ENCODE measurements at regions of chr10 and their contacts with region 1.

Region 1: DNA sequence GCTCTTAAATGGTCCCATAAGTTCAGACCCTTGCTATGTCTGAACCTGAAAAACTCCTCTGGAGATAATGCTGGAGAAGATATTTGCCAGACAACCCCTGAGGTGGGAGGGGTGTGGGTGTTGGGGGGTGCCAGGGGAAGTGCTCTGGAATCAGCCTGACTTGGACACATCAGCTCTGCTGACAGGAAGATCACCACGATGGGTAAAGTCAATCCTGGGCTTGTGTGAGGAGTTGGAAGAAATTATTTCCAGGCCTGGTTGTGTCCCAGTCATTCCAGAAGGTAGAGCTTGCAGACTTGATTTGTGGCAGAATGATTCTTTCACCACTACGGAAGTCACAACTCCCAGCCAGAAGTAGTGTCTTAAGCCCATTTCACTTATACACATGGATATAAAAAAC is 60.3 kb upstream of the UNC5B start:
- DNase-seq: no peak
- ATAC-seq: no peak
- H3K4me3 Mint-ChIP-seq: no peak overlapping the region
- H3K27ac Mint-ChIP-seq: no peak overlapping the region
- H3K4me1 Mint-ChIP-seq: peaks cover 3% of the 10 kb centered on the region
- H3K27me3 Mint-ChIP-seq: no peaks in the 10 kb centered on the region

Region 2: GRCh38 chr10:71094712-71095390 is 57.2 kb before region 1 on chr10:
- CTCF ChIA-PET with region 1: no interaction called
- POLR2A ChIA-PET with region 1: no interaction called
- DNase-seq: peak; percentile 20
- ATAC-seq: no peak
- H3K4me3 Mint-ChIP-seq: no peak overlapping the region
- H3K27ac Mint-ChIP-seq: no peak overlapping the region
- H3K4me1 Mint-ChIP-seq: no peaks in the 10 kb centered on the region
- H3K27me3 Mint-ChIP-seq: peaks cover 32% of the 10 kb centered on the region

Region 3: DNA sequence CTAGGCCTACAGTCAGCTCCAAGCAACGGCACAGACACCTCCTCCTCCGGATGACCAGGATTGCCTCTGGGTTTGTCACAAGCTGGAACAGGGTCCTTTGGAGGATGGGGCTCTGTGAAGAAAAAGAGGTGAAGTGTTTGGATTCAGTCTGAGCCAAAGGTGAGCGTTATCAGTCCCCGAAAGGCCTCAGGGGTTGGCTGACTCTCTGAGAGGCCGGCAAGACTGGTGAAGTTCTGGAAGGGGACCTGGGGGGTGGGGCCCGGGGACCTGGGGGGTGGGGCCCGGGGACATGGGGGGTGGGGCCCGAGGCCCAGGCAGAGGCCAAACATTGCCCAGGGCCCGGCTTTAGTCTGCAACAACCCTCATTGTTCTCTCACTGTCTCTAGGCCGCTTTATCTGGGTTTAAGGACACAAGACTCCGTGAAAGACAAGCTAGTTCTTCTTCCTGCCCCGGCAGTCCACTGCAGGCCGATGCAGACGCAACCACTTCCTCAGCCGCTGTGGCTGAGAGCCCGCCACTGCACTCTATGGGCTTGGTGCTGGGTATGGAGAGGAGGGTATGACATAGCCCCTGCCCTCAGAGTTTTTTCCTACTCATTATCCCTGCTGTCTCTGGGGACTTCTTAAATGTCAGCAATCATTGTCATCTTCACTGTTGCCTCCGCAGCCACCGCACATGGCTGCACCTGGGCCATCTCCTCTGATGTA is 726.4 kb after region 1 on chr10:
- CTCF ChIA-PET with region 1: no interaction called
- POLR2A ChIA-PET with region 1: interaction called, 10 read pairs
- DNase-seq: peak; percentile 66
- ATAC-seq: peak; percentile 94
- H3K4me3 Mint-ChIP-seq: peak overlapping the region; percentile 40
- H3K27ac Mint-ChIP-seq: peak overlapping the region; percentile 92
- H3K4me1 Mint-ChIP-seq: peaks cover 38% of the 10 kb centered on the region
- H3K27me3 Mint-ChIP-seq: peaks cover 2% of the 10 kb centered on the region